Aorta (tissue), 5 donors: ENCODE measurements at regions of chr4 and their contacts with region 1.

Region 1: GRCh38 chr4:107824353-107825071 is at the start of gene SGMS2:
- DNase-seq: peak; percentile 95 to 97
- ATAC-seq: peak; percentile 96
- H3K4me3 ChIP-seq: peak within 1 kb of the TSS; percentile 46 to 96
- H3K27ac ChIP-seq: peak within 1 kb of the TSS; percentile 79 to 93
- H3K4me1 ChIP-seq: no peaks in the 10 kb centered on the region
- H3K27me3 ChIP-seq: no peaks in the 10 kb centered on the region
- total RNA-seq, gene SGMS2: 39.1 to 50.2 TPM

Region 2: GRCh38 chr4:107153228-107153627 is 671.3 kb before region 1 on chr4:
- intact Hi-C with region 1: no loop called
- DNase-seq: no peak
- ATAC-seq: no peak
- H3K4me3 ChIP-seq: no peak overlapping the region
- H3K27ac ChIP-seq: no peak overlapping the region
- H3K4me1 ChIP-seq: no peaks in the 10 kb centered on the region
- H3K27me3 ChIP-seq: no peaks in the 10 kb centered on the region

Region 3: DNA sequence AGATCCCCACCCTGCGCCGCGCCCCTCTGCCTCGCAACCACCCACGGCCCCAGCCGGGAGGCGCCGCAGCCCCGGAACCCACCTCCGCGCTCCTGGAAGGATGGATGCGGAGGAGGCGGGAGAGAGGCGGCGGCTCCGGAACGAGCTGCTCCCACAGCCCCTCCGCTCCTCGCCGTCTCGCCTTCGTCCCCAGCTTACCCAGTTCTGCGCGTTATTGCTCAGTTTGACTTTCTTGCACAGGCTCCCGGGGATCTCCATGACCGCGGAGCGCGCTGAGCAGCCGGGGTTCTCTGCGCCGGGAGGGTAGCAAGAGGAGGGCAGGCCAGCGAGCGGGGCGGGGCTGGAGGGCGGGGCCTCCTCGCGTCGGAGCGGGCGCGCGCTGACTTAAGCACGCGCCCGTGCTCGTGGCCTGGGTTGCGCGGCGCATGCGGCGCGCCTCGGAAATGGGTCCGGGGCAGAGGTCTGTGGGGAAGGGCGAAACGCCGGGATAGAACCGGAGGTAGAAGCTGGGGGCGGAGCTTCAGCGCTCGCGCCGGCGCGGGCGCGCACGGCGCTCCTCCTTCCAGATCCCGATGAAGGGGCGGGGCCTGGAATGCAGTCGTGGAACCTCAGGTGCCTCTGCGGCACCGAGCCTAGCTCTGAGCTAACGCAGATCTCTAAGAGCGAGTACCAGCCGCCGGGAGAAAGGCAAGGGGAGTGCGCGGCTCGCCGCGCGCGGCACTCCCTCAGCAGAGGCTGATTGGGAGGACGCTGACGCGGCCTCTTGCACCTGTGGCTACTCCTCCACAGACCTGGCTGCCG is 104.4 kb before region 1 on chr4 and contains the start of gene PAPSS1:
- intact Hi-C with region 1: loop called in 1 of 2 experiments (anchors 10 kb)
- DNase-seq: peak; percentile 98 to 99
- ATAC-seq: peak; percentile 100
- H3K4me3 ChIP-seq: peak within 1 kb of the TSS; percentile 76 to 94
- H3K27ac ChIP-seq: peak within 1 kb of the TSS in 1 of 2 donors; percentile 77
- H3K4me1 ChIP-seq: peaks cover 0 to 2% of the 10 kb centered on the region in 2 donors
- H3K27me3 ChIP-seq: no peaks in the 10 kb centered on the region
- total RNA-seq, gene PAPSS1: 32.8 to 38.5 TPM

Region 4: GRCh38 chr4:107757864-107758476 is 66.5 kb before region 1 on chr4:
- intact Hi-C with region 1: loop called in 1 of 2 experiments (anchors 10 kb)
- DNase-seq: no peak
- ATAC-seq: no peak
- H3K4me3 ChIP-seq: no peak overlapping the region
- H3K27ac ChIP-seq: no peak overlapping the region
- H3K4me1 ChIP-seq: no peaks in the 10 kb centered on the region
- H3K27me3 ChIP-seq: peaks cover 0 to 2% of the 10 kb centered on the region in 2 donors

Region 5: GRCh38 chr4:107896158-107897045 is 71.9 kb after region 1 on chr4:
- intact Hi-C with region 1: loop called in 1 of 2 experiments (anchors 1 kb)
- DNase-seq: no peak
- ATAC-seq: no peak
- H3K4me3 ChIP-seq: no peak overlapping the region
- H3K27ac ChIP-seq: no peak overlapping the region
- H3K4me1 ChIP-seq: peaks cover 3 to 6% of the 10 kb centered on the region in 2 donors
- H3K27me3 ChIP-seq: no peaks in the 10 kb centered on the region

Region 6: DNA sequence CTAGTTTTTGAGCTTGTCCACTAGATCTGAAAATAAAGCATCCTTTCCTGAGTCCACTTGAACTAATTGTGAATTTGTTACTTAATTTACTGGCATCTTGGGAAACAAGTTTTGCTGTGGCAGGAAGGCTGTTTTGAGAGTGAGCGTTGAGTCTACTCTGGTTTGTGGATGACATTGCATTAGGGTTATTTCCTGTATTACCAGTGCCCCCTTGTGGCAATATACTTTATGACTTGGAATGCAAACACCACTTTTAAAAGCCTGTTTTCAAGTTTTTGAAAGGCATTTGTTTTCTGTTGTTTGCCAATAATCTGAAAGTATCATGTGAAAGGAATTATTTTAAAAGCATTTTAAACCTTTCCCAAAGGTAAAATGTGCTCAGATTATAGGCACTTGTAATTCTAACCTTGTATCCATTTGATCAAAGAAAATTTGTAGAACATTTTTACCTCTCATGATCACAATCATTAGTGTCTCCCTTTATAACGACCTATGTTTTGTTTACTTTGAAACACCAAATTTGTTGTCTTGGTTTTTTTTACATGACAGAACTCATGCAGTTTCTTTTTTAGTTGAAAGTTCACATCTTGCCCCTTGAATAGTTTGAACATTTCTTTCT is 88.9 kb after region 1 on chr4:
- intact Hi-C with region 1: loop called in 1 of 2 experiments (anchors 5 kb)
- DNase-seq: no peak
- ATAC-seq: peak; percentile 87
- H3K4me3 ChIP-seq: no peak overlapping the region
- H3K27ac ChIP-seq: no peak overlapping the region
- H3K4me1 ChIP-seq: no peaks in the 10 kb centered on the region
- H3K27me3 ChIP-seq: no peaks in the 10 kb centered on the region

Region 7: GRCh38 chr4:107989537-107990386 is 165.2 kb after region 1 on chr4 and contains the start of gene HADH:
- intact Hi-C with region 1: loop called in 1 of 2 experiments (anchors 5 kb)
- DNase-seq: peak; percentile 95 to 97
- ATAC-seq: peak; percentile 100
- H3K4me3 ChIP-seq: peak within 1 kb of the TSS; percentile 61 to 83
- H3K27ac ChIP-seq: peak within 1 kb of the TSS; percentile 79 to 93
- H3K4me1 ChIP-seq: peaks cover 3 to 7% of the 10 kb centered on the region in 2 donors
- H3K27me3 ChIP-seq: no peaks in the 10 kb centered on the region
- total RNA-seq, gene HADH: 38.2 to 79.2 TPM